ENCODE measurements at regions of chr7 and their contacts with region 1.

Region 1: GRCh38 chr7:66886152-66886551 is 34.9 kb upstream of the TMEM248 start:
- DNase-seq: peak; percentile 33
- ATAC-seq: peak; percentile 13
- H3K4me3 Mint-ChIP-seq: no peak overlapping the region
- H3K27ac Mint-ChIP-seq: peak overlapping the region; percentile 72
- H3K4me1 Mint-ChIP-seq: peaks cover 44% of the 10 kb centered on the region
- H3K27me3 Mint-ChIP-seq: no peaks in the 10 kb centered on the region

Region 2: DNA sequence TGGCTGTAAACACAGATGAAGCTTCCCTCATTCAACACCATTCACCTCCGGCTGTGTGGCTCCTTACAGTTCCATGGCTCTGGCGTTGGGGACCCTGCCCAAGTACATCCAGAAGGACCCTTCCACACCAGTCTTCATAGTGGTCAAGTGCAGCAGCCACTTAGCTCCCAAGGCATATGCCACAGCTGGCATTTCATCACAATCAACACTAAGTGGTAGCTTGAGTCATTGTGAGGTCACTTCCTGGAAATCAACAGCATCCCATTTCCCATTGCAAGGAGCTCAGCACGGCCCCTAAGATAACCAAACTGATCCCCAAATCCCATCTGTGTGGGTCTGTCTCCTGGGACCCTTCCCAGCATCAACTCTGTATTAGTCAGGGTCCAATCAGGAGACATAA is 506.4 kb before region 1 on chr7:
- CTCF ChIA-PET with region 1: no interaction called
- POLR2A ChIA-PET with region 1: no interaction called
- intact Hi-C with region 1: no loop called
- DNase-seq: no peak
- ATAC-seq: no peak
- H3K4me3 Mint-ChIP-seq: no peak overlapping the region
- H3K27ac Mint-ChIP-seq: no peak overlapping the region
- H3K4me1 Mint-ChIP-seq: no peaks in the 10 kb centered on the region
- H3K27me3 Mint-ChIP-seq: no peaks in the 10 kb centered on the region

Region 3: DNA sequence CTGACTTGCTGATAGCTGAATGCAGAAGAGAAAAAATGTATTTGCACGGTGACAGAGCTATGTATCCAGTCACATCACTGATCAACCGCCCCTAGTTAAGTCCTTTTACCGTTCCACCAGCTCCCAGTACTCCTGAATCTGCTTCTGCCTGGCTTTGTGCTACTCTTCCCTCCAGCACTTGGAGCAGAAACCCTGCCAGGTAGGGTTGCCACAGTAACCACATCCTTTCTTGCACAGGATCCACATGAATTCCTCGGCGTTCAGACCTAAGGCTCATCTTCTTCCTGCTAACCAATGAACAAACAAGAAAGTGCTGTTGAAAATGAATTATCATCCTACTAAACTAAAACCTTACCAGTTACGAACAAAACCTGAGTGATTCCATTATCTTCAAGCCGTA is 309.5 kb before region 1 on chr7:
- CTCF ChIA-PET with region 1: no interaction called
- POLR2A ChIA-PET with region 1: no interaction called
- intact Hi-C with region 1: no loop called
- DNase-seq: no peak
- ATAC-seq: no peak
- H3K4me3 Mint-ChIP-seq: no peak overlapping the region
- H3K27ac Mint-ChIP-seq: no peak overlapping the region
- H3K4me1 Mint-ChIP-seq: peaks cover 40% of the 10 kb centered on the region
- H3K27me3 Mint-ChIP-seq: no peaks in the 10 kb centered on the region

Region 4: DNA sequence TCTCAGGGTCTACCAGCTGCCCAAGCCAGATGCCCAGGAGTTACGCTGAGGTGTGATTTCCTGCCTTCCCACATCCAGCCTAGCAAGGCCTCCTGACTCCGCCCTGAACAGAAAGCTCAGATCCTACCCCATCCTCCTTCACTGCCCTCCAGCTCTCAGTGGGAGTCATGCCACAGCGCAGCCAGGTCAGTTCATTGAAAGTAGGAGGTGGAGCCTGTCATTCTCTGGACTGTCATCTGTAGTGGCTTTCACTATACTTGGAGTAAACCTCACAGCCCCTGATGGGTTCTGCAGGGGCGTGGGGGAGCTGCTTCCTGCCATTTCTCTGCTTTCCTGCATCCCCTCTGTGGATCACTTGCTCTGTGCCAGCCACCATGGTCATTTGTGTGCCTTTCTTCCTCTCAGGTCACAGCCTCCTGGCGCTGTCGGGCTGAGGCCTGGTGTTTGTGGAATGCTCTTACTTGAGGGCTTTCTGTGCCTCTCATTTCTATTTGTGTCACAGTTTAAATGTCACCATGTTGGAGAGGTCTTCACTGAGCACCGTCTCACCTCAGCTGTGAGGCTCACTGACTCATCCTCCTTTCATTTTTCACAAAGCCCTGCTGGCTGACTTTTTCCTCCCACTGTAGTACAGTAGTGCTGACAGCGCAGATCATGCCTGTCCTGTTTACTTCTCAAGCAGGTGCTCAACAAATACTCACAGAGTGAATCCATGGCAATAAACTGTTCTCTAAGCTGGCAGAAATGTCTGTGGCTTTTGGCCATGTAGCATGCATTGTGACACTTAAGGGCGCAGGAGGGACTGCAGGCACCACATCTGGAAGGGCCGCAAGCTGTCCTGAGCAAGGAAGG is 26.1 kb before region 1 on chr7:
- CTCF ChIA-PET with region 1: no interaction called
- POLR2A ChIA-PET with region 1: no interaction called
- intact Hi-C with region 1: loop called in 1 of 2 experiments (anchors 1 kb)
- DNase-seq: peak; percentile 78
- ATAC-seq: peak; percentile 98
- H3K4me3 Mint-ChIP-seq: peak overlapping the region; percentile 35
- H3K27ac Mint-ChIP-seq: peak overlapping the region; percentile 92
- H3K4me1 Mint-ChIP-seq: peaks cover 22% of the 10 kb centered on the region
- H3K27me3 Mint-ChIP-seq: no peaks in the 10 kb centered on the region

Region 5: GRCh38 chr7:66869660-66870450 is 16.3 kb before region 1 on chr7:
- CTCF ChIA-PET with region 1: interaction called, 3 read pairs
- POLR2A ChIA-PET with region 1: interaction called, 4 read pairs
- intact Hi-C with region 1: loop called in 1 of 2 experiments (anchors 1 kb)
- DNase-seq: peak; percentile 35
- ATAC-seq: peak; percentile 89
- H3K4me3 Mint-ChIP-seq: no peak overlapping the region
- H3K27ac Mint-ChIP-seq: peak overlapping the region; percentile 17
- H3K4me1 Mint-ChIP-seq: peaks cover 11% of the 10 kb centered on the region
- H3K27me3 Mint-ChIP-seq: no peaks in the 10 kb centered on the region